ENCODE measurements at regions of chr11 and their contacts with region 1.

Region 1: GRCh38 chr11:43952401-43953342 is 10.2 kb downstream of the C11orf96 start:
- DNase-seq: no peak

Region 2: GRCh38 chr11:43234881-43235280 is 717.8 kb before region 1 on chr11:
- intact Hi-C with region 1: no loop called
- DNase-seq: no peak

Region 3: GRCh38 chr11:43852057-43852636 is 100.5 kb before region 1 on chr11:
- intact Hi-C with region 1: no loop called
- DNase-seq: no peak

Region 4: DNA sequence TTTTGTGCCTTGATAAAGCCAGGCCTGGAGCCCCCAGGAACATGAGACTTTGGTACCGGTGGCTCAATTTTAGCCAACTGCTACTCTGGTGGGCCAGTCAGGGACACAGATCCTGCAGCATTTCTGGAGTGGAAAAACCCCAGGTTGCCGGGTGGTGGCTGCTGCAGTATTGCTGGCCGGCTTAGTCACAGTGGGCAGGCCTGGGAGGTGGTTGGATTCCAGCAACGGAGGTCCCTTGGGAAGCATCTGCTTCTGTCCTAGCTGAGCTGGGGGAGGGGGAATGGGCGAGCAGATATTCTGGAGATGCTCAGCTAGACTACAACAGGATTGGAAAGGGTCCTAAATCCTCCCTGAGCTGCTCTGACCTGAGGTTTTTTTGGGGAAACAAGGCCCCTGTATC is 63.5 kb after region 1 on chr11:
- intact Hi-C with region 1: loop called in 1 of 2 experiments (anchors 5 kb)
- DNase-seq: peak; percentile 92

Region 5: GRCh38 chr11:45110562-45110961 is 1157.9 kb after region 1 on chr11:
- intact Hi-C with region 1: no loop called
- DNase-seq: peak; percentile 71

Measured in posterior vena cava (tissue), 2 donors.